OCI-LY7 (cell line): ENCODE measurements at regions of chr19 and their contacts with region 1.

Region 1: DNA sequence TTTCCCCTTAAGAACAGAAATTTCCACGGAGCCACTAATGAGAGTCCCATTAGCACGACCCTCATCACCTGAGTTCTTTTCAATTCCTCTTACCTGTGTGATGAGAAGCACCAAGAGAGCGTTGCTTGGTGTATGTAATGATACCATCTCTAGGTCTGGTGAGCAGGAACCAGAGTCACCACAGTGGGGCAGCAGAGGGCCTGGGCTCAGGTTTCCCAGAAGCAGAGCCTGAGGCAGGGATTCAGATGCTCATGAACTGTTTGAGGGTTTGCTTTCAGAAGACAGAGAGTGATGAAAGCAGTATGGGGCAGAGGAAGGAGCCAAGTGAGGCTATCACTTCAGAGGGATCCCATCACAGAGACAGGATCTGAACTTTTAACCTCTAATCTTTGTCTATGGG is 3.1 kb upstream of the PTPRH start:
- DNase-seq: peak; percentile 87
- H3K4me3 ChIP-seq: no peak overlapping the region
- H3K27ac ChIP-seq: no peak overlapping the region
- H3K4me1 ChIP-seq: peaks cover 16% of the 10 kb centered on the region
- CTCF ChIP-seq: peak; percentile 97

Region 2: DNA sequence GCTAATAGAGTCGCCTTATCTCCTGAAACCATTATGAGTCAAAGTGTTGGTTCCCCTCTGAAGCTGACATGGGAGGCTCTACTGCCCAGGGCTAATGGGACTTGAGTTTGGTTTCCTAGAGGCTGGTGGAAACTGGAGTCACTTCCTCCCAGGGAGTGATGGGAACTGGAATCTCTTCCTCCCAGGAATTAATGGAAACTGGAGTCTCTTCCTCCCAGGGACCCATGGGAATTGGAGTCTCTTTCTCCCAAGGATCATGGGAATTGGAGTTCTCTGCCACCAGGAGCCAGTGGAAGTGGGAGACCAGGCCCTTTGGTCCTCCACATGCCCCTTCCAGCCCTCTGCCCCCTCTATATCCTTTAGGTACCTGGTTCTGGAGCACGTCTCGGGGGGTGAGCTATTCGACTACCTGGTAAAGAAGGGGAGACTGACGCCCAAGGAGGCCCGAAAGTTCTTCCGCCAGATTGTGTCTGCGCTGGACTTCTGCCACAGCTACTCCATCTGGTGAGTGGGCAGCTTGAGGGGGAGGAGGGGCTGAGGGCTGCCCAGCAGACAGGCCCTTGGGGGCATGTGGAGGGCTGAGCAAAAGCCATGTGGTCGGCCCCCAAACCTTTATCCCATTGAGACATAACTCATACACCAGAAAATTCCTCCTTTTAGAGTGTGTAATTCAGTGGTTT is 76.8 kb after region 1 on chr19:
- CTCF ChIA-PET with region 1: no interaction called
- POLR2A ChIA-PET with region 1: no interaction called
- intact Hi-C with region 1: loop called (anchors 1 kb)
- DNase-seq: no peak
- H3K4me3 ChIP-seq: no peak overlapping the region
- H3K27ac ChIP-seq: no peak overlapping the region
- H3K4me1 ChIP-seq: peaks cover 22% of the 10 kb centered on the region
- CTCF ChIP-seq: no peak